ENCODE measurements at regions of chr1 and their contacts with region 1.

Region 1: GRCh38 chr1:85307987-85308832 is 31.8 kb upstream of the BCL10 start:
- DNase-seq: no peak
- H3K4me3 ChIP-seq: no peak overlapping the region
- CTCF ChIP-seq: peak; percentile 99

Region 2: DNA sequence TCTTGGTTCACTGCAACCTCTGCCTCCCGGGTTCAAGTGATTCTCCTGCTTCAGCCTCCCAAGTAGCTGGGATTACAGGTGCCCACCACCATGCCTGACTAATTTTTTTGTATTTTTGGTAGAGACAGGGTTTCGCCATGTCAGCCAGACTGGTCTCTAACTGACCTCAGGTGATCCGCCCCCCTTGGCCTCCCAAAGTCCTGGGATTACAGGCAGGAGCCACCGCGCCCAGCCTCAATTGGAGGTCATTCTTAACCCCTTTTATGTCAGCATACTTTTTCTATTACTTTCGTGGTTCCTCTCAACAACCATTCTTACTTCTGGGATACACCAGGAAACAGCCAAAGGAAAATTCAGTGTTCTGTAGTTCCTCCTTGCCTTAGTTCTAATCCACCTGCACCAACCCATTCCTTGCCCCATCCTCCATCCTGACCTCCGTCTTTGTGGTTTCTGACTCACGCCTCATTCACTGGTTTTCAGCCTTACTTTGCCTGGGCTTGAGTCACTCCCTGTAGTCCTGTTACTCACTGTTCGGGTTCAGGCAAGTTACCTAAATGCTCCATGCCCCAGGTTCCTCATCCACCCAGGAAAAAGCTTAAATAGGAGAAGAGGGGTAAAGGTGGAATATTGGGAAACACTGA is 18.9 kb before region 1 on chr1:
- CTCF ChIA-PET with region 1: interaction called, 29 read pairs
- POLR2A ChIA-PET with region 1: no interaction called
- DNase-seq: no peak
- H3K4me3 ChIP-seq: no peak overlapping the region
- CTCF ChIP-seq: no peak

Region 3: DNA sequence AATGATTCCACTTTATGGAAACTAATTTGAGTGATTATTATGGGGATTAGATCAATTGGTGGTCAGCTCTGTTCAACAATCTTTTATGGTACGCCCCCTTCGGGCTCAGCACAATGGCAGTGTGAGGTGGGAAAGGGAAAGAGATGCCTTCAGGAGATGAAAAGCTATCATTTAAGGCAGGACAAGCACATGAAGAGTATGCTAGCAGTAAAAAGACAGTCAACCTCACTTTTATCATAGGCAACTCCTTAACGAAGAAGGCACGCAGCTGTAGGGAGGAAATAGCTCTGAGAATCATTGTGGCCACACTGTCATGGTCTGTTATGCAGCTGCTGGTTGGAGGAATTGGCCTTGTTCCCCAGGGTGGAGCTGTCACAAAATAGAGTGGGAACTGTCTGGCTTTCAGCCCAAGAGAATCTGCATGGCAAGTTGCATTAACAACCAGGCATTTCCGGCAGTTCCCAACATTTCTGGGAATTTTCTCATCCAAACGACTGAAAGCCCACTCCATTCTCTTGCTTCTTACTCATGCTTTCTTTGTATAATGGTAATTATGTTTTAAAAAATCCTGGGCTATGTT is 22.6 kb after region 1 on chr1:
- CTCF ChIA-PET with region 1: interaction called, 14 read pairs
- POLR2A ChIA-PET with region 1: no interaction called
- DNase-seq: peak; percentile 96
- H3K4me3 ChIP-seq: no peak overlapping the region
- CTCF ChIP-seq: no peak

Region 4: GRCh38 chr1:85372683-85373446 is 64.7 kb after region 1 on chr1:
- CTCF ChIA-PET with region 1: interaction called, 11 read pairs
- POLR2A ChIA-PET with region 1: no interaction called
- DNase-seq: no peak
- H3K4me3 ChIP-seq: no peak overlapping the region
- CTCF ChIP-seq: no peak

Region 5: GRCh38 chr1:85453640-85454194 is 145.5 kb after region 1 on chr1:
- CTCF ChIA-PET with region 1: interaction called, 11 read pairs
- POLR2A ChIA-PET with region 1: no interaction called
- DNase-seq: no peak
- H3K4me3 ChIP-seq: no peak overlapping the region
- CTCF ChIP-seq: no peak

Region 6: DNA sequence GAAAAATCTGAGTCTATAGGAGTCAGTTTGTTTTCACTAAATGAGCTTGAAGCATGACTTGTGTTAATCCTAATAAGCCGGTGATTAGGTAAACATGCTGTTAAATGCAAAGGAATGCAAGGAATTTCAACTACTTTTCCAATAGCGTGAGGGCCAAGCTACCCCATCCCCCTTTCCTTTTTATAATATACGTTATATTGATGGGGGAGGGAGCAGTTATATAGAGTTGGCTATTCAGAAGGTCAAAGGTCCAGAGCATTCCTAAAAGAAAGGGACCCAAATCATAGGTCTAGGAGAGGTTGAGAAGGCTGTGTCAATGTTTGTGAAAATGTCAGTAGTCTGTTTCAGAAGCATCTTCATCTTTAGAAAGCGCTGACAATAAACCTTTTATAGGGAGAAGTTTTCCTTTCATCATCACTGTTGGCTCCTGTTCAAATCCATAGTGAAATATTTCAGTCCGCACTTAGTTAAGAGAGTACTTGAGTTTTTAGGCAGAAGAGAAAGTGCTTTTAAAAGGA is 276.1 kb after region 1 on chr1:
- CTCF ChIA-PET with region 1: interaction called, 14 read pairs
- POLR2A ChIA-PET with region 1: interaction called, 5 read pairs
- DNase-seq: peak; percentile 97
- H3K4me3 ChIP-seq: peak overlapping the region; percentile 98
- CTCF ChIP-seq: no peak

Measured in AG04449 (cell line).